PC-3 (cell line): ENCODE measurements at regions of chr12 and their contacts with region 1.

Region 1: DNA sequence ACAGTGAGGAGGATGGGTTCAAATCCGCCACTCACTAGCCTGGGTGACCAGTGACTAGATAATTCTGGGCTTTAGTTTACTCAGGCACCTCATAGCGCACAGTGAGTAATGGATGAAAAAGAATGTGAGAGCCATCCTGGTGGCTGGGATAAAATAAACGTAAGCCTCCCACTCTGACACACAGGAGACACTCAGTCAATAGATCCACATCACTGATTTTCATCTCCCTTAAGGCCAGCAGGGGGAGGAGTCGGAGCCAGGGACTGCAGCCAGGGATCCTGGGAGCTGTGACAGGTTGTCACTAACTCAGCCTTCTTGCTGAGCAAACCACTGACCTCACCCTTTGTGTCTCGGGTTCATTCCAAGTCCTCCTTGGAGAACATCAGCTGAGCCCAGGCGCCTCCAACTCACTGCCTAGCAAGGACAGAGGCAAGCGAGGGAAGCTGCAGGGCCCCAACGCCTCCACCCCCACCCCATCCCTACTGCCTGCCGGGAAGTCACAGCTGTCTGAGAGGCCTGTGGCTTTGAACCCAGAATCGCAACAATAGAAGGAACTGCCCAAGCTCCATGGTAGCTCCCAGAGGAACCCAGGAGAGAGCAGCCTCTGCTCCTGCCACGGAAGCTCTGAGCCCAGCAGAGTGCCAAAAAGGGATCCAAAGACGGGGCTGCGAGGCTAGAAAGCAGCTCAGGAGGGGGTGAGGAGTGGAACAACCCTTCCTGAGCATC is 30.7 kb downstream of the PXN start:
- DNase-seq: peak; percentile 99
- ATAC-seq: peak; percentile 29
- H3K4me3 ChIP-seq: peak overlapping the region; percentile 21; the same call in 1 of the 2 replicates
- H3K27ac ChIP-seq: peak overlapping the region; percentile 93
- H3K4me1 ChIP-seq: peaks cover 84% of the 10 kb centered on the region
- H3K27me3 ChIP-seq: no peaks in the 10 kb centered on the region
- CTCF ChIP-seq: peak; percentile 61

Region 2: GRCh38 chr12:119387996-119388395 is 846.8 kb before region 1 on chr12:
- CTCF ChIA-PET with region 1: no interaction called
- POLR2A ChIA-PET with region 1: no interaction called
- intact Hi-C with region 1: no loop called
- DNase-seq: no peak
- ATAC-seq: no peak
- H3K4me3 ChIP-seq: no peak overlapping the region
- H3K27ac ChIP-seq: no peak overlapping the region
- H3K4me1 ChIP-seq: no peaks in the 10 kb centered on the region
- H3K27me3 ChIP-seq: peaks cover 13% of the 10 kb centered on the region; the same call in 1 of the 2 replicates
- CTCF ChIP-seq: no peak

Region 3: DNA sequence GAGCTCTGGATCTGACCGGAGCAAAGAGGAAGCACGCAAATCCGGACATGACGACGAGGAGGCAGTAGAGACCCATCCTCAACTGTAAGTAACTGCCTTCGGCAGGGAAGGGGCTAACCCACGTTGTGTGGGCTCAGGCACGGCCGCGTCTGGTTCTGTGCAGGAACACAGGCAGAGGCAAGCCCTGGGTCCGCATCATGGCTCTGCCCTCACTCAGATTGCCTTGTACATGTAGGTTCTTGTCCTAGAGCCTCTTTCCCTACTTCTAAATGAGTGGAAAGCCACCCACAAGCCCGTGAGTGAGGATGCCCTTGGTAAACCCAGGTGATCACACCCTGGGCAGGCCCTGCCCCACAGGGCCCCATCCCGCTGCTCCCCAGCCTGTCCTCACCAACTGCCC is 25.0 kb before region 1 on chr12:
- CTCF ChIA-PET with region 1: no interaction called
- POLR2A ChIA-PET with region 1: interaction called, 15 read pairs
- intact Hi-C with region 1: no loop called
- DNase-seq: no peak
- ATAC-seq: peak; percentile 1; the same call in 1 of the 2 replicates
- H3K4me3 ChIP-seq: no peak overlapping the region
- H3K27ac ChIP-seq: no peak overlapping the region
- H3K4me1 ChIP-seq: no peaks in the 10 kb centered on the region
- H3K27me3 ChIP-seq: no peaks in the 10 kb centered on the region
- CTCF ChIP-seq: no peak

Region 4: DNA sequence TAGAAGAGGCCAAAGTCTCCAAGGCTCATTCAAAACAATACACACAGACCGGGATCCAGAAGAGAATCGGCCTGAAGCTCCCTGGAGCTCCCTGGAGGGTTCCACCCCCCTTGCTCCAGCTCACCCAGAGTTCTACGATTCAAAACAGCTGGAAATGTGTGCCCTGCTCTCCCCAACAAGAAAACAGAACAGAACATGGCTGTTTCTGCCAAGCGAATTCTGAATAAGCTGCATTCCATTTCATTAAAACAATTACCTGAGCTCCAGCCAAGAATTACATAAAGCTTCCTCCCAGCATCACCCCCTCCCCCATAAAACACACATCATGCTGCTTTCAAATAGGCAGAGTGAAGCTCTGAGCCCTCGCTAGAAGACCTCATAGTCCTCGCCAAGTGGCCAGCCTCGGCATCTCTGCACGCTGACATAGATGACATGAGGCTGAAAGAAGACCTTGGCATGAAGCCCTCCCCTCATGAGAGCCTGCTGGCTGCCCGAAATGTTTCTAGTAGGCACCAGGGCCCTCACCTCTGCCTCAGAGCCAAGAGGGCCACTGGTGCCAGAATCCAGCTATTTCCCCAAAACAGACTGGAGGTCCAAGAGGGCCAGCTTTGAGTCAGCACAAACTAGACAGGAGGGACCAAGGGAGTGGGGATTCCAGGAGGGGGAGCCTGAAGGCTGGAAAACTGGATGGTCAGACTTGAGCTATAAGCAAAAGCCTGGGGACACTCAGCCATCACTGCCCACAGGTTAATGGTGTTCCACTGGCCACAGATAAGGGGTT is 22.4 kb after region 1 on chr12:
- CTCF ChIA-PET with region 1: interaction called, 142 read pairs
- POLR2A ChIA-PET with region 1: interaction called, 40 read pairs
- intact Hi-C with region 1: loop called (anchors 1 kb)
- DNase-seq: peak; percentile 89
- ATAC-seq: peak; percentile 68
- H3K4me3 ChIP-seq: peak overlapping the region; percentile 46
- H3K27ac ChIP-seq: peak overlapping the region; percentile 77
- H3K4me1 ChIP-seq: peaks cover 64% of the 10 kb centered on the region
- H3K27me3 ChIP-seq: no peaks in the 10 kb centered on the region
- CTCF ChIP-seq: 0 out of 2 replicates have a peak, but pooled peaks have one; percentile 28

Region 5: GRCh38 chr12:120265473-120266179 is 30.8 kb after region 1 on chr12 and contains the start of gene PXN:
- CTCF ChIA-PET with region 1: interaction called, 142 read pairs
- POLR2A ChIA-PET with region 1: interaction called, 52 read pairs
- intact Hi-C with region 1: loop called (anchors 1 kb)
- DNase-seq: peak; percentile 89
- ATAC-seq: peak; percentile 41
- H3K4me3 ChIP-seq: peak within 1 kb of the TSS; percentile 91
- H3K27ac ChIP-seq: peak within 1 kb of the TSS; percentile 91
- H3K4me1 ChIP-seq: peaks cover 28% of the 10 kb centered on the region
- H3K27me3 ChIP-seq: no peaks in the 10 kb centered on the region
- CTCF ChIP-seq: peak; percentile 83
- total RNA-seq, gene PXN: 313 and 413 TPM in 2 replicates

Region 6: GRCh38 chr12:120350576-120351350 is 116.0 kb after region 1 on chr12:
- CTCF ChIA-PET with region 1: no interaction called
- POLR2A ChIA-PET with region 1: no interaction called
- intact Hi-C with region 1: no loop called
- DNase-seq: no peak
- ATAC-seq: peak; percentile 64
- H3K4me3 ChIP-seq: no peak overlapping the region
- H3K27ac ChIP-seq: no peak overlapping the region
- H3K4me1 ChIP-seq: peaks cover 6% of the 10 kb centered on the region
- H3K27me3 ChIP-seq: no peaks in the 10 kb centered on the region
- CTCF ChIP-seq: no peak